Activated naive CD4-positive, alpha-beta T cell treated with anti-CD3 and anti-CD28 coated beads, Interleukin-2, amount 10 ng/mL, durations not matched to agents 7 days and 5 days (primary cell): ENCODE measurements at regions of chr17 and their contacts with region 1.

Region 1: GRCh38 chr17:8079291-8080207 is 8.0 kb downstream of the ALOX12B start:
- DNase-seq: peak; percentile 81
- H3K4me3 Mint-ChIP-seq: peak overlapping the region; percentile 83
- H3K27ac Mint-ChIP-seq: peak overlapping the region; percentile 73
- H3K4me1 Mint-ChIP-seq: peaks cover 17% of the 10 kb centered on the region
- H3K27me3 Mint-ChIP-seq: peaks cover 35% of the 10 kb centered on the region

Region 2: GRCh38 chr17:8091033-8091687 is 11.6 kb after region 1 on chr17:
- CTCF ChIA-PET with region 1: interaction called, 22 read pairs
- DNase-seq: no peak
- H3K4me3 Mint-ChIP-seq: no peak overlapping the region
- H3K27ac Mint-ChIP-seq: no peak overlapping the region
- H3K4me1 Mint-ChIP-seq: peaks cover 20% of the 10 kb centered on the region
- H3K27me3 Mint-ChIP-seq: peaks cover 92% of the 10 kb centered on the region